Left ventricle myocardium inferior (tissue), 1 donor: ENCODE measurements at regions of chr6 and their contacts with region 1.

Region 1: DNA sequence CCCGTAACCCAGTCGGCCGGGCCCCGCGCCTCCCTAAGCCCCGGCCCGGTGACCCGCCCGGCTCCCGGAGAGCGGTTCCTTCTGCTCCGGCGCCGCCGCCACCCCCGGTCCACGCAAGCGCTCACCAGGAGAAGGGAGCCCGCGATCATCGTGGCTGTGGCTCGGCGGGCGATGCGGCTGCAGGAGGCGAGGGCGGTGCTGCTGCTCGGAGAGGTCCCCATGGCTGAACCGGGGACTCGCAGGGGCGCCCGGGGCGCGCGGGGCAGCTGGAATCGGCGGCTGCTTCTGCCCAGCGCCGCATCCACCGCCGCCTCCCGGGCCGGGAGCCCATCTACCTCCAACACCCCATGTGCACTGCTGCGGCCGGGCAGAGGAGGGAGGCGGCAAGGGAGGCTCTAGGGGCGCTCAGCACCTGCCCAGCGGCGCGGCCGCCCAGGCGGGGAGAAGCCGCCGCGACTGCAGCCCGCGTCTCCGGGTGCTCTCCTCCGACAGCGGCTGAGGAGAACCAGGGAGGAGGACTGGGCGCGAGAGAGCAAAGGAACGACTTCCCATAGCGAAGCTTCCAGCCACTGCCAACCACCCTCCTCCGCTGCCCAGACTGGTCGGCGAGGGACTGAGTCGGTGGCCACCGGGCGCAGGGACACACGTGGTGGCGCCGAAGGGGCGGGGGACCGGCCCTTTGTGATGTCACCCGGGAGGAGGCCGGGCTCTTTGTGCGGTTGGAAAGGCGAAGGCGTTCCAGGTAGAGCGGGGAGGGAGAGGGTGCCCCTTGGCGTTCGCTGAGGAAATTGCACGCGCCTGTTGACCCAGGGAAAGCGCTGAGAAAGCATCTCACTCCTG is at the start of gene TNFRSF21:
- DNase-seq: peak; percentile 91
- H3K4me3 ChIP-seq: peak within 1 kb of the TSS; percentile 86
- H3K27ac ChIP-seq: peak within 1 kb of the TSS; percentile 85
- H3K4me1 ChIP-seq: peaks cover 22% of the 10 kb centered on the region
- H3K27me3 ChIP-seq: peaks cover 68% of the 10 kb centered on the region
- CTCF ChIP-seq: peak; percentile 98
- total RNA-seq, gene TNFRSF21: 6.3 TPM

Region 2: DNA sequence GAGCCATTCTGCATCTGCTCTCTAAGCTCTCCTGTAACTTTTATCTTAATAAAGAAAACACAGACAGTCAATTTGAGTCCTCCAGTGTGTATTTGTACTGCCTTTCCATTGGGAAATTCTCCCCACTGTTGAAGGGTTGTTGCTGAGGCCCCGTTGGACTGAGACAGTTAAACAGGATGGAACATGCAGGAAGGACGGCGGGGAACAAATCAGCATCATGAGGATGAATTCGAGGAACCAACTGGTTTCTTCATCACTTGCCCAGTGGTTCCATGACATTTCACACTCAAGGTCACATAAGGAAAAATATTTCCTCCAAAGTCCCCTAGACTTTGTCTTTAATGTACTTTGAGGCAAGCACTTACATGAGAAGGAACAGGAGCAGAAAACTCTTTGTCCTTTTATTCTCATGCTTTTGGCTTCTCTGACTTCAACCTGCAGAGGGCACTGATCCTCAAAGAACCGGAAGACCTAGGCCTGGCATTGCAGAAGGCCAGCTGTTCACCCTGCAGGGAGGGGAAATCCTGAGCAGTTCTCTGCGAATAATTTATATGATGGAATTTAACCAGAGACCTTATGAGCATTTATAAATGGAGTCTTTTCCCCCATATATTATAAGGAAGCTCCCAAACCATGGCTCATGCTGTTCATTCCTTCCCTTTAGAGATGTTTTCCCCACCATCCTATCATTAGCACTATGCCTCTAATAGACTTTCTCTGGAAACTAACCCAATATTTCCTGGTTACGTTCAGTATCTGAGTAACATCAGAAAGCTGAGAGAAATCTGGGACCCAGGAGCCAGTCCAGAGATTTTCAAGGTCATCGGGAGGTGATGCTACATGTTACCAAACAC is 212.2 kb before region 1 on chr6:
- intact Hi-C with region 1: loop called (anchors 5 kb)
- DNase-seq: peak; percentile 45
- H3K4me3 ChIP-seq: no peak overlapping the region
- H3K27ac ChIP-seq: peak overlapping the region; percentile 53
- H3K4me1 ChIP-seq: peaks cover 33% of the 10 kb centered on the region
- H3K27me3 ChIP-seq: peaks cover 13% of the 10 kb centered on the region
- CTCF ChIP-seq: peak; percentile 76